GM18951 (cell line): ENCODE measurements at regions of chr11 and their contacts with region 1.

Region 1: DNA sequence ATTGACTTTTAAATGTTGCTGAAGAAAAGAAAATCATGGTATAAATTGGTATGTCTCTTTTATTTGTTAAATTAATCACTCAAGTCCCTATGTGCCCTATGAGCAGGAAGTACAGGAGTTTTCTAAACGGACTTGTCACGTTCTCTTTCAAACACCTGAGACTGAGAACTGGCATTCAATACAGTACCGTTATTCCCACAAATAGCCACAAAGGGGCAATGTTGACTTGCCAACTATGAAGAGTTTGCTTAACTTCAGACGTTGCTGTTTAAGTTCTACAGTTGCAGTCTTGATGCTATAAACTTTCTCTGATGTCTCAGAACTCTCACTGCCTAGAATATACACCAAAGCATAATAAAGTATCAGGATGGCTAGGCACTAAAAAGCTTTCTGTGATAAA is 7.6 kb downstream of the OR56A1 start:
- POLR2A ChIP-seq: no peak

Region 2: DNA sequence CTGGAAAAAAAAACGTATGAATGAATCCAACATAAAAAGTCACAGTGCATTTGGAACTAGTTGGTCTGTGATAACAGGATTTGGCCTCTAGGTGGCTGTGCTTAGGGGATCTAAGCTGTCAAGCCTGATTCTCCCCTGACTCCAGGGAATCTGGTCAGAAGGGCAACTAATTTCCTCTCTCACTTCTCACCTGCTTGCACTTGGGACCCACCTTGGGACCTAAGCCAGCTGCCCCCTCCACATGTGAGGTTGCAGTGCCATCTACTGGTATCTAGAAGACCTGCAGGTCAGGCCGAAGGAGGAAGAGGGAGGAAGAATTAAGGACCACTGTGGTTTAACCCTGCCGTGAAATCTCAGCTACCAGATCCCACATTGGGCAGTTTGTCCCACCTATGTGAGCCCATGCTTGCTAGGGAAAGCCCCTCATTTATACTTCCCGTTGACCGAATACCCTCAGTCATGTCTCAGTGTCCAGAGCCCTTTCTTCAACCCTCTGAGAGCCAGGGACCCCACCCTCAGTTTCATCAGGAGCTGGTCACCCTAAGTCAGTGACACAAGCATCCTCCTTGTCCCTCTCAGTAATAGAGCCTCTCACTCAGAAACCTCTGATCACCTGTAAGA is 330.5 kb after region 1 on chr11:
- in situ Hi-C with region 1: loop called (anchors 10 kb)
- POLR2A ChIP-seq: no peak